ENCODE measurements at regions of chr6 and their contacts with region 1.

Region 1: DNA sequence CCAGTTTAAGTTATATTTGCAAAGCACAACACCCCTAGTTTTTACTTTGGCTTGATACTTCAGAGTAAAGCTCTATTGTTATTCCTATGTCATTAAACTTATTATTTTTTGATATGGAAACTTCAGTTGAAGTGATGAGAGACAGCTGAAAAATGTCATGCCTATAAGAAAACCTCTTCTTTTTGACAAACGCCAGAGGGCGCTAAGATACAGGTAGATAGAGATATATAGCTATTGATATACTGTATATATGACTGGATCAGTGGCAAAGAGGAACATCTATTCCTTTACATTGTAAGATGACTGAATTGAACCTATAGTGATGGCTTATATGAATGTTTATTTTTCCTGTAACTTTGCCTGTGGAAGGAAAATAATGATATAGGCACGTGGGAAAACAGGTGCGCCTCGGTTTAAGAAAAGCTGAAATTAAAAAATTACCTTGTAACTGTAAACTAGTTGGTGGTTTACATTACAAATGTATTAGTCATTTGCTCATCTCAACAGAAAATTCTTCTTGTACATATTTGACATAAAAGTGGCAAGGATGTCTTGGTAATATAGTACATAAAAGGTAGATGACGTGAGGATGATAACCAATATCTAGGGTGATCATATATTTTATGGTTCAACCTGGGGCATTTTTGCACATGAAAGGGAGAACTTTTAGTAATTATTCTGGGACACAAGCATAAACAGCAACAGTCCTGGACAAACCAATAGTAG is 74.1 kb downstream of the LAMA4 start:
- DNase-seq: no peak
- H3K4me3 ChIP-seq: no peak overlapping the region
- H3K27ac ChIP-seq: no peak overlapping the region
- H3K4me1 ChIP-seq: no peaks in the 10 kb centered on the region
- H3K27me3 ChIP-seq: no peaks in the 10 kb centered on the region
- CTCF ChIP-seq: peak; percentile 34 to 66 (median 56)
- POLR2A ChIP-seq: no peak

Region 2: GRCh38 chr6:112144145-112144926 is 35.9 kb before region 1 on chr6:
- intact Hi-C with region 1: no loop called
- DNase-seq: no peak
- H3K4me3 ChIP-seq: peak overlapping the region in 1 of 3 donors; percentile 7
- H3K27ac ChIP-seq: peak overlapping the region; percentile 14 to 32
- H3K4me1 ChIP-seq: no peaks in the 10 kb centered on the region
- H3K27me3 ChIP-seq: no peaks in the 10 kb centered on the region
- CTCF ChIP-seq: no peak
- POLR2A ChIP-seq: no peak

Region 3: GRCh38 chr6:112253841-112254816 is 73.9 kb after region 1 on chr6 and contains the start of gene LAMA4:
- intact Hi-C with region 1: loop called (anchors 10 kb)
- DNase-seq: peak in 1 of 2 donors; percentile 56
- H3K4me3 ChIP-seq: peak within 1 kb of the TSS; percentile 65 to 78 (median 72)
- H3K27ac ChIP-seq: peak within 1 kb of the TSS; percentile 86 to 96
- H3K4me1 ChIP-seq: no peaks in the 10 kb centered on the region
- H3K27me3 ChIP-seq: no peaks in the 10 kb centered on the region
- CTCF ChIP-seq: no peak
- POLR2A ChIP-seq: no peak
- total RNA-seq, gene LAMA4: 54.0 to 142 (median 129) TPM

Measured in breast epithelium (tissue), 4 donors.